ENCODE measurements at regions of chr14 and their contacts with region 1.

Region 1: GRCh38 chr14:100067971-100068959 is 3.0 kb downstream of the EVL start:
- DNase-seq: peak; percentile 70 to 98 (median 88)
- ATAC-seq: peak; percentile 50
- H3K4me3 ChIP-seq: peak overlapping the region; percentile 73 to 85
- H3K4me3 Mint-ChIP-seq: peak overlapping the region; percentile 100
- H3K27ac ChIP-seq: peak overlapping the region; percentile 83 to 87
- H3K27ac Mint-ChIP-seq: peak overlapping the region; percentile 99
- H3K4me1 ChIP-seq: peaks cover 59% of the 10 kb centered on the region
- H3K4me1 Mint-ChIP-seq: peaks cover 82% of the 10 kb centered on the region
- H3K27me3 ChIP-seq: no peaks in the 10 kb centered on the region
- H3K27me3 Mint-ChIP-seq: no peaks in the 10 kb centered on the region
- CTCF ChIP-seq: no peak

Region 2: DNA sequence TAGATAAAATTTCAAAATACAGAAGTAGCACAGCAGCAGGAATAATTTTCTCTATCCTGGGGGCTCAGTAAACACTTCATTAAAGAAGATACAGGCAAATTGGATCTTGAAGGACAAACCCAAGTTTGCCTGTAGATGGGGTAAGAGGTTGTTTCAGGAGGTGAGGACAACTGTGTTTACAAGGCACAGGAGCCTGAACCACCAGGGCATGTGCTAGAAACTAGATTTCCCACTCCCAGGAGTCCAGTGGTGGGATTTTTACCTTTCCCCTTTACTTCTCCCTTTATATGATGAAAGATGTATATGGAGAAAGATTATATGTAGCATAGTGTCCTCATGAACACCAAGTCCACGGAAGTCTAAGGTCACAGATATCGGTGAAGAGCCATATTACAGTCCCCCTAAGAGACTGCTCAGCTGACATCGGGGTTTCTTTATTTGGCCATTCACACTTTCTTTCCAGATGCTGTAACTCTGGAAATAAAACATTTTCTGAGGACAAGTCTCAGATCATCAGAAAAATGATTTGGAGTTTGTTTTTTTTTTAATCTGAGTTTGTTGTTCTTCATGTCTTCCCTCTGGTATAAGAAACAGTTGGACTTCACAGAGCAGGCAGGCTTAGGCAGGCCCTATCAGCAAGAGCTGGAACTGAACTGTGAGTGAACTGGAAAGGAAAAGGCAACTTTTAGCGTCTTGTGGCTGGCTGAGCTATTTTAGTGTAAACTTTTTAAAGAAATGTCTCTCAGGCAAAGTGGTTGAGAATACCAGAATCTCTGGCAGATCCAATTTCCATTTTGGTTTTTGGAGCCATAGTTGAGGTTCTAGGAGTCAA is 11.1 kb before region 1 on chr14:
- CTCF ChIA-PET with region 1: interaction called, 51 read pairs
- POLR2A ChIA-PET with region 1: interaction called, 21 read pairs
- intact Hi-C with region 1: loop called (anchors 1 kb)
- DNase-seq: peak in 4 of 9 experiments; percentile 35 to 84 (median 62)
- ATAC-seq: peak; percentile 71
- H3K4me3 ChIP-seq: no peak overlapping the region
- H3K4me3 Mint-ChIP-seq: peak overlapping the region; percentile 21
- H3K27ac ChIP-seq: peak overlapping the region in 1 of 2 experiments; percentile 12
- H3K27ac Mint-ChIP-seq: peak overlapping the region; percentile 94
- H3K4me1 ChIP-seq: peaks cover 57% of the 10 kb centered on the region
- H3K4me1 Mint-ChIP-seq: peaks cover 54% of the 10 kb centered on the region
- H3K27me3 ChIP-seq: no peaks in the 10 kb centered on the region
- H3K27me3 Mint-ChIP-seq: no peaks in the 10 kb centered on the region
- CTCF ChIP-seq: peak; percentile 77

Region 3: GRCh38 chr14:100078991-100079725 is 10.9 kb after region 1 on chr14:
- CTCF ChIA-PET with region 1: interaction called, 227 read pairs
- POLR2A ChIA-PET with region 1: interaction called, 368 read pairs
- intact Hi-C with region 1: loop called (anchors 1 kb)
- DNase-seq: peak; percentile 74 to 95 (median 88)
- ATAC-seq: peak; percentile 66
- H3K4me3 ChIP-seq: peak overlapping the region; percentile 27
- H3K4me3 Mint-ChIP-seq: peak overlapping the region; percentile 77
- H3K27ac ChIP-seq: peak overlapping the region; percentile 55 to 63
- H3K27ac Mint-ChIP-seq: peak overlapping the region; percentile 99
- H3K4me1 ChIP-seq: peaks cover 95% of the 10 kb centered on the region
- H3K4me1 Mint-ChIP-seq: peaks cover 97% of the 10 kb centered on the region
- H3K27me3 ChIP-seq: no peaks in the 10 kb centered on the region
- H3K27me3 Mint-ChIP-seq: no peaks in the 10 kb centered on the region
- CTCF ChIP-seq: no peak

Region 4: GRCh38 chr14:100221533-100222223 is 153.4 kb after region 1 on chr14:
- CTCF ChIA-PET with region 1: no interaction called
- POLR2A ChIA-PET with region 1: interaction called, 20 read pairs
- intact Hi-C with region 1: no loop called
- DNase-seq: peak; percentile 40 to 85 (median 74)
- ATAC-seq: peak; percentile 96
- H3K4me3 ChIP-seq: peak overlapping the region; percentile 68 to 95
- H3K4me3 Mint-ChIP-seq: no peak overlapping the region
- H3K27ac ChIP-seq: peak overlapping the region; percentile 76 to 77
- H3K27ac Mint-ChIP-seq: no peak overlapping the region
- H3K4me1 ChIP-seq: peaks cover 45% of the 10 kb centered on the region
- H3K4me1 Mint-ChIP-seq: peaks cover 7% of the 10 kb centered on the region
- H3K27me3 ChIP-seq: no peaks in the 10 kb centered on the region
- H3K27me3 Mint-ChIP-seq: no peaks in the 10 kb centered on the region
- CTCF ChIP-seq: no peak

Region 5: DNA sequence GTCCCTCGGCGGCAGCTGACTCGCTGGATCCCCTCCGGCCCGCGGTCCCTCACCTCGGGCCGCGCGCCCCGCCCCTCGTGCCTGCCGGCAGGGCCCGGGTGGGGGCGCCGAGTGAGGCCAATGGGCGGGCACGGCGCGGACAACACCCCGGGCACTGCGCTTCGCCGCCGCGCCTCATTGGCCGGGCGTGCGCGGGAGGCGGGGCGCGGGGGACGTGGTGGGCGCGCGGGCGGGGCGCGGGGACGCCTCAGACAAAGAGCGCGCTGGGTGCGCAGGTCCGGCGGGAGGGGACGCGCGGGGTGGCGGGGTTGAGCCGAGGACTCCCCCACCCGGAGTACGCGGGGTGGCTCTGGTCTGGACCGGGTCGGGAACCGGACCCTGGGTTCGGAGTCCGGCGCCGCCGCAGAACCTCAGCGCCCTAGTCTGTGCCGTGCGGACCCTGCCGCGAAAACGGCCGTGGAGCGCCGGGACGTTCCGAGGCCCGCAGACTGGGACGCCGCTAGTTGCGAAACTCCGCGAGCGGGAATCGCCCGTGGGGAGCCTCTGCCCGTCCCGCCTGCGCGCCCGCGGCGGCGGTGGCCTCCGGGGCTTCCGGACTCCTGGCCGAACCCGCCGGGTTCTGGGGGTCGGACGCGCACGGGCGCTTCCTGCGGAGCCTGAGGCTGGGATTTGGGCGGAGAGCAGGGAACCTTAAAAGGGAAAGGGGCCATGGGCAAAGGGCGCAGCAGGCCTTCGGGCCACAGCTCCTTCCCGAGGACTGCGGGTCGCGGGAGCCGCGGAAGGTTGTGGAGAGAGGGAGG is 238.4 kb after region 1 on chr14 and contains the start of gene SLC25A29:
- CTCF ChIA-PET with region 1: no interaction called
- POLR2A ChIA-PET with region 1: no interaction called
- intact Hi-C with region 1: no loop called
- DNase-seq: peak; percentile 39 to 89 (median 76)
- ATAC-seq: peak; percentile 77
- H3K4me3 ChIP-seq: peak within 1 kb of the TSS; percentile 60 to 76
- H3K4me3 Mint-ChIP-seq: peak within 1 kb of the TSS; percentile 86
- H3K27ac ChIP-seq: no peak within 1 kb of the TSS
- H3K27ac Mint-ChIP-seq: peak within 1 kb of the TSS; percentile 60
- H3K4me1 ChIP-seq: peaks cover 18% of the 10 kb centered on the region
- H3K4me1 Mint-ChIP-seq: peaks cover 18% of the 10 kb centered on the region
- H3K27me3 ChIP-seq: no peaks in the 10 kb centered on the region
- H3K27me3 Mint-ChIP-seq: no peaks in the 10 kb centered on the region
- CTCF ChIP-seq: no peak
- total RNA-seq, gene SLC25A29: 19.4 to 22.8 TPM

Measured in CD8-positive, alpha-beta T cell (primary cell).